ENCODE measurements at regions of chr6 and their contacts with region 1.

Region 1: GRCh38 chr6:90088009-90088408 is 193.7 kb downstream of the GJA10 start:
- DNase-seq: peak; percentile 95
- H3K4me3 Mint-ChIP-seq: peak overlapping the region; percentile 22
- H3K27ac Mint-ChIP-seq: peak overlapping the region; percentile 99
- H3K4me1 Mint-ChIP-seq: peaks cover 35% of the 10 kb centered on the region
- H3K27me3 Mint-ChIP-seq: no peaks in the 10 kb centered on the region
- CTCF ChIP-seq: no peak

Region 2: GRCh38 chr6:89999154-89999553 is 88.9 kb before region 1 on chr6:
- CTCF ChIA-PET with region 1: interaction called, 10 read pairs
- POLR2A ChIA-PET with region 1: interaction called, 21 read pairs
- intact Hi-C with region 1: no loop called
- DNase-seq: peak; percentile 95
- H3K4me3 Mint-ChIP-seq: no peak overlapping the region
- H3K27ac Mint-ChIP-seq: no peak overlapping the region
- H3K4me1 Mint-ChIP-seq: peaks cover 13% of the 10 kb centered on the region
- H3K27me3 Mint-ChIP-seq: no peaks in the 10 kb centered on the region
- CTCF ChIP-seq: no peak

Region 3: DNA sequence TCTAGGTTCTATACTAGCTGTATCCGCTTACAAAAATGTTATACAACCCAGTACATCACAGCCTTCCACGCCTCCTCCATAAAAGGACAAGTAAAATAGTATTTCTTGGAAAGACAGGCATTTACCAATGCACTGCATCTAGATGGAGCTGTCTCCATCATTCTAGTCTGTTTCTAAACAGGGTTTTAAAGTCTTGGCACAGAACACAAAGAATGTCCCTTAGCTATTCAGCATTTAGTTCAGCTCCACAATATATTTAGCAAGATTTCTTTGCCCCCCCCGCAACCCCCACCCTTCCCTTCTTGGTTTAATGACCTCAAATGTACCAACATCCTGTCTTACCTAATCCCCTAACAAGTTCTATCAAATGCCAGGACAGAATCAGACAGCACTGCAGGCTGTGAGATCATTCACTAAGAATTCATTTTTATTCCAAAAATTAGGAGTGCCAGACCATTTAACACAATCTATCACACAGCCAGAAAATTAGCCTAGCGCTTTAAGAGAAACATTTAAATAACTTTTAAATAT is 10.1 kb after region 1 on chr6:
- CTCF ChIA-PET with region 1: interaction called, 18 read pairs
- POLR2A ChIA-PET with region 1: interaction called, 45 read pairs
- intact Hi-C with region 1: loop called (anchors 1 kb)
- DNase-seq: peak; percentile 97
- H3K4me3 Mint-ChIP-seq: no peak overlapping the region
- H3K27ac Mint-ChIP-seq: peak overlapping the region; percentile 96
- H3K4me1 Mint-ChIP-seq: peaks cover 43% of the 10 kb centered on the region
- H3K27me3 Mint-ChIP-seq: no peaks in the 10 kb centered on the region
- CTCF ChIP-seq: peak; percentile 40

Region 4: GRCh38 chr6:90179190-90180169 is 91.5 kb after region 1 on chr6:
- CTCF ChIA-PET with region 1: no interaction called
- POLR2A ChIA-PET with region 1: interaction called, 3 read pairs
- intact Hi-C with region 1: loop called (anchors 5 kb)
- DNase-seq: peak; percentile 31
- H3K4me3 Mint-ChIP-seq: no peak overlapping the region
- H3K27ac Mint-ChIP-seq: no peak overlapping the region
- H3K4me1 Mint-ChIP-seq: peaks cover 24% of the 10 kb centered on the region
- H3K27me3 Mint-ChIP-seq: no peaks in the 10 kb centered on the region
- CTCF ChIP-seq: peak; percentile 32

Region 5: GRCh38 chr6:90296346-90297114 is 208.5 kb after region 1 on chr6 and contains the start of gene BACH2:
- CTCF ChIA-PET with region 1: interaction called, 6 read pairs
- POLR2A ChIA-PET with region 1: interaction called, 6 read pairs
- intact Hi-C with region 1: loop called (anchors 1 kb)
- DNase-seq: peak; percentile 89
- H3K4me3 Mint-ChIP-seq: peak within 1 kb of the TSS; percentile 76
- H3K27ac Mint-ChIP-seq: peak within 1 kb of the TSS; percentile 39
- H3K4me1 Mint-ChIP-seq: peaks cover 9% of the 10 kb centered on the region
- H3K27me3 Mint-ChIP-seq: peaks cover 17% of the 10 kb centered on the region
- CTCF ChIP-seq: no peak
- total RNA-seq, gene BACH2: 7.5 and 9.9 TPM in 2 replicates